ENCODE measurements at regions of chr2 and their contacts with region 1.

Region 1: DNA sequence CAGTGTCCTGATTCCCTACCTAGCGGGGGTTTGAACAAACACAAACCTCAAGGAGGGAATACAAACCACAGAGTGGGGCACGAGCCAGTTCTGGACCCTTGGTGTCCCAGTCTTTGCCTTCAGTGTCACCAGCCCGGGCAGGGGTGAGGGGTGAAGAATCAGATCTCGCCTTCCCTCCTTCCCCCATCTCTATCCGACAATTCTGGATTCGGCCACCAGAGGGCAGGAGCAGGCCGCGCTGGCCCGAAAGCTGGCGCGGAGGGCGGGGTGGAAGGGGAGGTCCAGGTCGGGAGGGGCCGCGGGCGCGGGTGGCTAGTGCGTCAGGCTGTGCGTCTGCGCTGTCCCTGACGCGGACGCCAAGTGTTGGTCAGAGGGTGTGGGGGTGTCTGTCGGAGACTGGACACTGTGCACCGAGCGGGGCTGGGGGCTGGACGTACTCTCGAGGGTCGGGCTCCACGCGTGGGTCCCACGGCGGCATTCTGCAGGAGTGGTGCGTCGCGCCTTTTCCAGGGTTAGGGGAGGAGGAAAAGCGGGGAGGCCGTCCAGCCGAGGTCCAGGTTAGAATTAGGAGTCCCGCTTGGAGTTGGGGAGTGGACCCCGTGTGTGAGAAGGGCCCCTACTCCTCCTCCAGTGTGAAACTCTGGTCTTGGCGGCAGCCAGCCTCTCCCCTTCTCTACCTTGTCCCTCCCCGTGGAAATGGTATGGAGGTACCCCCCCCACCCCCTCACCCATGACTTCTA is 2.9 kb upstream of the CRYBA2 start:
- DNase-seq: no peak
- H3K4me3 ChIP-seq: peak overlapping the region; percentile 25 to 57 (median 46)
- H3K27ac ChIP-seq: no peak overlapping the region
- H3K4me1 ChIP-seq: peaks cover 26 to 42% (median 32%) of the 10 kb centered on the region in 4 donors
- H3K27me3 ChIP-seq: peaks cover 0 to 100% (median 63%) of the 10 kb centered on the region in 4 donors
- CTCF ChIP-seq: peak; percentile 83 to 93 (median 83)
- EP300 ChIP-seq: no peak
- POLR2A ChIP-seq: no peak

Region 2: DNA sequence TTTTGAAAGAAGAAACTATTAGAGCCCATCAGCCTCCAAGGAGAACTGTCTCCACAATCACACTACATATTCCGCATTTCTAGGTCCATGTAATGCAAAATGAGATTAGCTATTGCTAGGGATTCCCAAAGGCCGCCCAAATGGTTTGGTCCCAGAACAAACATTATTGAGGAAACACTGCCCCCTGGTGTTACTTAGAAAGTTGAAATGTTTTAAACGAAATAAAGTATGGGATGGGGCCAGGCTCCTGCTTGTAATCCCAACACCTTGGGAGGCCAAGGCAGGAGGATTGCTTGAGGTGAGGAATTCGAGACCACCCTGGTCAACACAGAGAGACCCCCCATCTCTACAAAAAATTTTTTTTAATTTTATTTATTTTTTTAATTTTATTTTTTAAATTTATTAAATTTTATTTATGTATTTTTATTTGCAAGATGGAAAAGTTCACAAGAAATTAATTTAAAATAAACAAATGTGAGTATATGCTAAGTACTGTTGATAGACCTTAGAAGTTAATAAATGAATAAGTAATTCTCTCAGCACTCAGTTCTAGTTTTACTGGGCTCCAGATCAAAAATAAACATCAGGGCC is 159.0 kb after region 1 on chr2:
- intact Hi-C with region 1: loop called (anchors 10 kb)
- DNase-seq: no peak
- H3K4me3 ChIP-seq: no peak overlapping the region
- H3K27ac ChIP-seq: no peak overlapping the region
- H3K4me1 ChIP-seq: peaks cover 4 to 8% (median 6%) of the 10 kb centered on the region in 4 donors
- H3K27me3 ChIP-seq: no peaks in the 10 kb centered on the region
- CTCF ChIP-seq: peak; percentile 55 to 67 (median 58)
- EP300 ChIP-seq: no peak
- POLR2A ChIP-seq: no peak

Measured in esophagus muscularis mucosa (tissue), 4 donors.